ENCODE measurements at regions of chr2 and their contacts with region 1.

Region 1: GRCh38 chr2:230007931-230008707 is 60.6 kb downstream of the SLC16A14 start:
- DNase-seq: peak; percentile 60 to 66
- H3K4me3 ChIP-seq: no peak overlapping the region
- H3K4me3 Mint-ChIP-seq: no peak overlapping the region
- H3K27ac Mint-ChIP-seq: no peak overlapping the region
- H3K4me1 ChIP-seq: no peaks in the 10 kb centered on the region
- H3K4me1 Mint-ChIP-seq: no peaks in the 10 kb centered on the region
- H3K27me3 ChIP-seq: no peaks in the 10 kb centered on the region
- H3K27me3 Mint-ChIP-seq: no peaks in the 10 kb centered on the region
- CTCF ChIP-seq: peak; percentile 60 to 61

Region 2: GRCh38 chr2:229703909-229704630 is 304.0 kb before region 1 on chr2:
- CTCF ChIA-PET with region 1: no interaction called
- POLR2A ChIA-PET with region 1: no interaction called
- intact Hi-C with region 1: no loop called
- DNase-seq: no peak
- H3K4me3 ChIP-seq: no peak overlapping the region
- H3K4me3 Mint-ChIP-seq: no peak overlapping the region
- H3K27ac Mint-ChIP-seq: no peak overlapping the region
- H3K4me1 ChIP-seq: no peaks in the 10 kb centered on the region
- H3K4me1 Mint-ChIP-seq: no peaks in the 10 kb centered on the region
- H3K27me3 ChIP-seq: no peaks in the 10 kb centered on the region
- H3K27me3 Mint-ChIP-seq: peaks cover 6% of the 10 kb centered on the region
- CTCF ChIP-seq: no peak

Region 3: DNA sequence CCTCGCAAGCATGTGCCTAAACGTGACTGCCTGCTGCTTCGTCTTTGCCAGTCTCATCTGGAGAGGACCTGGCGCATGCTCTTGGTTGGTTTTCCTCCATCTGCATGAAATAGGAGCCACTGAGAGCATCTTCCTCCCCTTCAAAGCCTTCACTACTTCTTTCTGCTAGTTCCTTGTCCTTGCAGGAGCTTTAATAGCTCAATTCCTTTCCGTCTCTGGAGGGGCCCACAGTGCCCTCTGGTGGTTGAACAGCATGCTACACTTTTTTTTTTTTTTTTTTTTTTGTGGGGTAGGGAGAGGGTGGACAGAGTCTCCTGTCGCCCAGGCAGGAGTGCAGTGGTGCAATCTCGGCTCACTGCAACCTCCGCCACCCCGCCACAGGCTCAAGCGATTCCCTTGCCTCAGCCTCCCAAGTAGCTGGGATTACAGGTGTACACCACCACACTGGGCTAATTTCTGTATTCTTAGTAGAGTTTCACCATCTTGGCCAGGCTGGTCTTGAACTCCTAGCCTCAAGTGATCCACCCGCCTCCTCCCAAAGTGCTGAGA is 152.1 kb after region 1 on chr2:
- CTCF ChIA-PET with region 1: interaction called, 5 read pairs
- POLR2A ChIA-PET with region 1: no interaction called
- intact Hi-C with region 1: loop called (anchors 1 kb)
- DNase-seq: peak in 1 of 2 experiments; percentile 10
- H3K4me3 ChIP-seq: no peak overlapping the region
- H3K4me3 Mint-ChIP-seq: no peak overlapping the region
- H3K27ac Mint-ChIP-seq: no peak overlapping the region
- H3K4me1 ChIP-seq: no peaks in the 10 kb centered on the region
- H3K4me1 Mint-ChIP-seq: no peaks in the 10 kb centered on the region
- H3K27me3 ChIP-seq: no peaks in the 10 kb centered on the region
- H3K27me3 Mint-ChIP-seq: no peaks in the 10 kb centered on the region
- CTCF ChIP-seq: peak; percentile 42 to 48